H1 (cell line): ENCODE measurements at regions of chr20 and their contacts with region 1.

Region 1: GRCh38 chr20:58888521-58889333 is 36.2 kb downstream of the GNAS start:
- DNase-seq: peak in 1 of 2 experiments; percentile 84
- H3K4me3 ChIP-seq: peak overlapping the region; percentile 78 to 95 (median 85)
- H3K27ac ChIP-seq: peak overlapping the region; percentile 53; the same call in 1 of the 2 replicates
- H3K4me1 ChIP-seq: peaks cover 0 to 10% (median 5%) of the 10 kb centered on the region in 4 experiments; a peak in 6 of 7 replicates
- H3K27me3 ChIP-seq: peaks cover 0 to 6% (median 2%) of the 10 kb centered on the region in 4 experiments; a peak in 2 of 7 replicates
- CTCF ChIP-seq: no peak
- EP300 ChIP-seq: no peak; a peak in 1 of 3 replicates
- POLR2A ChIP-seq: peak; percentile 98 to 99
- RAD21 ChIP-seq: no peak

Region 2: GRCh38 chr20:58822149-58822548 is 66.6 kb before region 1 on chr20:
- CTCF ChIA-PET with region 1: no interaction called
- POLR2A ChIA-PET with region 1: no interaction called
- DNase-seq: no peak
- H3K4me3 ChIP-seq: no peak overlapping the region
- H3K27ac ChIP-seq: no peak overlapping the region
- H3K4me1 ChIP-seq: 0 out of 7 replicates have a peak, but pooled peaks cover 0 to 2% (median 0%) of the 10 kb centered on the region in 4 experiments
- H3K27me3 ChIP-seq: no peaks in the 10 kb centered on the region
- CTCF ChIP-seq: peak; percentile 42 to 67 (median 46)
- EP300 ChIP-seq: no peak
- POLR2A ChIP-seq: no peak
- RAD21 ChIP-seq: peak; percentile 56 to 72

Region 3: GRCh38 chr20:58850693-58851174 is 38.0 kb before region 1 on chr20 and contains the start of gene GNAS-AS1:
- CTCF ChIA-PET with region 1: no interaction called
- POLR2A ChIA-PET with region 1: interaction called, 12 read pairs
- DNase-seq: peak; percentile 76 to 96
- H3K4me3 ChIP-seq: peak within 1 kb of the TSS; percentile 68 to 88 (median 78)
- H3K27ac ChIP-seq: peak within 1 kb of the TSS; percentile 87
- H3K4me1 ChIP-seq: peaks cover 0 to 32% (median 15%) of the 10 kb centered on the region in 4 experiments; a peak in 6 of 7 replicates
- H3K27me3 ChIP-seq: peaks cover 16 to 47% (median 41%) of the 10 kb centered on the region in 4 experiments
- CTCF ChIP-seq: peak in 2 of 3 experiments; percentile 9 to 11; a peak in 2 of 4 replicates
- EP300 ChIP-seq: no peak
- POLR2A ChIP-seq: no peak; a peak in 1 of 3 replicates
- RAD21 ChIP-seq: no peak
- total RNA-seq, gene GNAS-AS1: 11.7 and 13.7 TPM in 2 replicates

Region 4: DNA sequence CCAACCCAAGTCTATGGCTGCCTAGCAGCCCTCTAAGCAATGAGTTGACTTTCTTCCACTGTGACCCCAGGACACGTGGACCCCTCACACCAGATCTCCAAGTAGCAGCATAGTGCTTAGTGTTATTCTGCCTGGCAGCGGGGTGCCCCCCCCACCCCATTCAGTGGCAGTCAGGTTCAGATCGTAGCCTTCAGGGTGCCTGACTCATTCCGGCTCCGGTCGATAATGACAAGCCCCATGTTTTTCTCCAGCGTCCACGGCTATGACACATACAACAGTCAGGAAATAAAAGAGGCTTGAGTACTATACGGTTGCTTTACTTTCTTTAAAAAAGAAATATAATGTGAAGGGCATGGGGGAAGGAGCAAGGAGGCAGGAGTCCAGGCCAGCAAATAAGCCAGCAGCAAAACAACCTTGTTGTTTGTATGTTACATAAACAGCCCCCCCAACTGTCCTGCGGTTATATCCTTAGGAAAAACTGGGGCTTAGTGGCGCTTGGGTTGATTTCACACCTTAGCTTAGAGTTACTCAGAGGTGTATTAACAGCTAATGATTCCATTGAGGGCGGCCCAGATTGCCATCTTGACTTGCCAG is 13.1 kb before region 1 on chr20:
- CTCF ChIA-PET with region 1: interaction called, 61 read pairs
- POLR2A ChIA-PET with region 1: interaction called, 26 read pairs
- DNase-seq: no peak
- H3K4me3 ChIP-seq: no peak overlapping the region
- H3K27ac ChIP-seq: no peak overlapping the region
- H3K4me1 ChIP-seq: peaks cover 3 to 23% (median 18%) of the 10 kb centered on the region in 4 experiments
- H3K27me3 ChIP-seq: no peaks in the 10 kb centered on the region
- CTCF ChIP-seq: no peak
- EP300 ChIP-seq: no peak
- POLR2A ChIP-seq: no peak
- RAD21 ChIP-seq: no peak

Region 5: DNA sequence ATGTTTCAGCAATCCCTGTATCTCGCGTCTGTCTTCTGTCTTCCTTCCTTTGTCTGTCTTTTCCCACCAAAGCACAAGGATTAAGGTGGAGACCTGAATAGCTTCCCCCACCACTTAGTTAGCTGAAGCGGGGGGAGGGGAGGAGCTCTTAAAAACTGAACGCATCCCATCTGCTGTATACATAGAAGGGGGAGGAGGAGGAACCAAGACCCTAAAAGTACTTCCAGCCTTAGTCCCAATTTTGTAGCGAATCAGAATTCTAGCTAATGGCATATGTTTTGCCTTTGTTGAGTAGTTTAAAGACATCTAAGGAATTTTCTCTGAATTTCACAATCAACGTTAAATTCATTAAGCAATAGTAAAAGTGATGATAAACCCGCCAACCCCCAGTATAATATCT is 11.7 kb after region 1 on chr20:
- CTCF ChIA-PET with region 1: interaction called, 6 read pairs
- POLR2A ChIA-PET with region 1: interaction called, 37 read pairs
- DNase-seq: no peak
- H3K4me3 ChIP-seq: peak overlapping the region in 1 of 4 experiments; percentile 21; a peak in 1 of 8 replicates
- H3K27ac ChIP-seq: no peak overlapping the region
- H3K4me1 ChIP-seq: peaks cover 13 to 24% (median 20%) of the 10 kb centered on the region in 4 experiments
- H3K27me3 ChIP-seq: no peaks in the 10 kb centered on the region
- CTCF ChIP-seq: no peak
- EP300 ChIP-seq: no peak
- POLR2A ChIP-seq: 0 out of 3 replicates have a peak, but pooled peaks of 1 of the 2 experiments have one; percentile 1
- RAD21 ChIP-seq: no peak

Region 6: DNA sequence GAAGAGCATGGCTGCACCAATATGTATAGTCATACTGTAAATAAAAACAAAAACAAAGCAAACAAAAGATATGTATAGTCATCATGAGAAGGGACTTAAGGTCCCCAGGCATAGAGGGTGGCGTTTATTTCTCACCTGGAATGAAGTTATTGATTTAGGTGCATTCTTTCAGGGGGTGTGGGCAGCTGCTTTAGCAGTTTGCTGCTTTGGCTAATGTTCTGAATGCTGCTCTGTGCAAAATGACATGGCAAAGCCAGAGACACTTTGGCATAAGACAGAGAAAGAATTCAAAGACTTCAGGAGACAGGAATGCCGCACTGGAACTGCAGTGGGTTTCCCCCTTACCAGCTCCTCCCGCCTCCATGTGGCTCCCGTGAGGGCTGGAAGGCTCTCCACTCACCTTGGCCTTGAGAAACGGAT is 55.9 kb after region 1 on chr20:
- CTCF ChIA-PET with region 1: no interaction called
- POLR2A ChIA-PET with region 1: no interaction called
- DNase-seq: no peak
- H3K4me3 ChIP-seq: no peak overlapping the region
- H3K27ac ChIP-seq: no peak overlapping the region
- H3K4me1 ChIP-seq: no peaks in the 10 kb centered on the region
- H3K27me3 ChIP-seq: no peaks in the 10 kb centered on the region; a peak in 1 of 7 replicates
- CTCF ChIP-seq: no peak
- EP300 ChIP-seq: no peak
- POLR2A ChIP-seq: no peak
- RAD21 ChIP-seq: no peak

Region 7: GRCh38 chr20:58980700-58981627 is 92.2 kb after region 1 on chr20 and contains the start of gene NELFCD:
- CTCF ChIA-PET with region 1: no interaction called
- POLR2A ChIA-PET with region 1: interaction called, 11 read pairs
- DNase-seq: peak; percentile 72 to 96
- H3K4me3 ChIP-seq: peak within 1 kb of the TSS; percentile 67 to 94 (median 78)
- H3K27ac ChIP-seq: peak within 1 kb of the TSS; percentile 97; the same call in 1 of the 2 replicates
- H3K4me1 ChIP-seq: peaks cover 0 to 3% (median 0%) of the 10 kb centered on the region in 4 experiments; a peak in 2 of 7 replicates
- H3K27me3 ChIP-seq: no peaks in the 10 kb centered on the region
- CTCF ChIP-seq: no peak
- EP300 ChIP-seq: no peak
- POLR2A ChIP-seq: peak; percentile 85 to 88
- RAD21 ChIP-seq: no peak
- total RNA-seq, gene NELFCD: 56.3 and 59.6 TPM in 2 replicates